Cardiac septum (tissue), 1 donor: ENCODE measurements at regions of chr17 and their contacts with region 1.

Region 1: GRCh38 chr17:10460062-10460461 is 9.3 kb downstream of the MYH4 start:
- DNase-seq: no peak

Region 2: GRCh38 chr17:10499950-10500349 is 39.9 kb after region 1 on chr17:
- intact Hi-C with region 1: loop called (anchors 2 kb)
- DNase-seq: no peak